Activated T-helper 2 cell treated with anti-CD3 and anti-CD28 coated beads, Interferon-gamma antibody, Interleukin-2, Interleukin-4, amounts not matched to agents 10 μg/mL and 5 μg/mL and 100 μg/mL, durations not matched to agents 14 hours and 24 hours and 36 hours (primary cell): ENCODE measurements at regions of chr18 and their contacts with region 1.

Region 1: DNA sequence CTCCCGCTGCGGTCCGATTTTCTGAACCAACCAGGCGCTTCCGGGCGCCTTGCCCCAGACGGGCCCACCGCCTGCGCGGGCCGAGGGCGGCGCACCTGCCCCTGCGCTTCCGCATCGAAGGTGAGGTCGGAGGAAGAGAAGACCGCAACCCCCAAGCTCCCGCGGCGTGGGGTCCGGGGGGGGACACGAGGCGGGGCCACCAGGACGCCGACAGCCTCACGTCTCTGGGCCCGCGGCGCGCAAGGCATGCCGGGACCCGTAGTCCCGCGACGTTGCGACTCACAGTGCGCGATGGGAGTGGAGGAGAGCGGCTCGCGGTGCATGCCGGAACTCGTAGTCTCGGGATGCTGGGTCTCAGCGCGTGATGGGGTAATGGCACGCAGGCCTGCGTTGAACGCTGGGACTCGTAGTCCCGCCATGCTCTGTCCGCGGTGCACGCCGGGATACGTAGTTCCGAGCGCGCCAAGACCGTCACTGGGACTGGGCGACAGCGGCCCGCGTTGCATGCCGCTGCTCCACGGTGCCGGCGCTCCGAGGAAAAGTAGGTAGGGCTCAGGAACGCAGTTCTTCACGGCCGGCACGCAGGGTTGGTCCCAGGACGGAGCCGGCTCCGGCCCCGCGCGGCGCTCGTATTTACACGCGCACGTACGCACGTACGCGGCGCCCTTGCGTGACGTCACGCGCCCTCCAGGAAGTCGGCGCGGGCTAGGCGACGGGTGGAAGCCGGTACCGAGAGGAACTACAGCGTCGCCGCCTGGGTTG is at the start of gene CTDP1:
- DNase-seq: peak; percentile 98
- H3K4me3 Mint-ChIP-seq: peak within 1 kb of the TSS; percentile 92
- H3K27ac Mint-ChIP-seq: peak within 1 kb of the TSS; percentile 98
- H3K4me1 Mint-ChIP-seq: peaks cover 57% of the 10 kb centered on the region
- H3K27me3 Mint-ChIP-seq: no peaks in the 10 kb centered on the region
- total RNA-seq, gene CTDP1: 42.0 and 43.3 TPM in 2 replicates

Region 2: GRCh38 chr18:79393635-79394533 is 285.4 kb before region 1 on chr18:
- intact Hi-C with region 1: loop called (anchors 1 kb)
- DNase-seq: no peak
- H3K4me3 Mint-ChIP-seq: peak overlapping the region; percentile 85
- H3K27ac Mint-ChIP-seq: peak overlapping the region; percentile 89
- H3K4me1 Mint-ChIP-seq: peaks cover 11% of the 10 kb centered on the region
- H3K27me3 Mint-ChIP-seq: peaks cover 33% of the 10 kb centered on the region

Region 3: DNA sequence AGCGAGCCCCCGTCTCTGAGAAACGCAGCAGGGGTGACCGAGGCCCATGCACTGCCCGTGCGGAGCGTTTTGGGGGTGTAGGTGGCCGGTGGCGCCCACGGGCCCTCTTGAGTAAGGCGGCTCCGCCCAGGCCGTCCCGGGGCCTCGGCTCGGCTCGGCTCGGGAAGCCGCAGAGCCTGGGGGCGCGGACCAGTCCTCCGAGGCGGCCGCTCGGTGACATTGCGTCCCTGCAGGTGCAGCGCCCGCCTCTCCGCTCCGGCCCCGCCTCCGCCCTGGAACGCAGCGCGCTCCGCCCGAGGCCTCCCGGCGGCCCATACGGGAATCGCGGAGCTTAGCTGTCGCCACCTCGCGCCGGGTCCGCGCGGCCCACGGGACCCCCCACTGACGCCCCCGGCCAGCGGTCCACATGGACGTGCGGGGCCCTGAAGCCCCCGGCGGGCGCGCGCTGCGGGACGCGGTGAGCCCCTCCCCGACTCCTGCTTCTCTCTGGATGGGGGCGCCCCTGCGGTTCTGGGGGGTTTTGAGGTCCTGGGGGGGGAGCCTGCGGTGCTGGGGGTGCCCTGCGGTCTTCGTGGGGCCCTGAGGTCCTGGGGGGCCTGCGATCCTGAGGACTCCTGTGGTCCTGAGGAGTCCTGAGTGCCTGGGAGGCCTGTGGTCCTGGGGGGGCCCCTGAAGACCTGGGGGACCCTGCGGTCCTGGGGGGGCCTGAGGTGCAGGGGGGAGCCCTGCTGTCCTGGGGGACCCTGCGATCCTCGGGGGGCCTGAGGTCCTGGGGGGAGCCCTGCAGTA is 285.2 kb after region 1 on chr18 and contains the start of gene HSBP1L1:
- intact Hi-C with region 1: loop called (anchors 5 kb)
- DNase-seq: peak; percentile 65
- H3K4me3 Mint-ChIP-seq: peak within 1 kb of the TSS; percentile 76
- H3K27ac Mint-ChIP-seq: peak within 1 kb of the TSS; percentile 75
- H3K4me1 Mint-ChIP-seq: peaks cover 40% of the 10 kb centered on the region
- H3K27me3 Mint-ChIP-seq: no peaks in the 10 kb centered on the region
- total RNA-seq, gene HSBP1L1: 12.0 and 15.5 TPM in 2 replicates

Region 4: DNA sequence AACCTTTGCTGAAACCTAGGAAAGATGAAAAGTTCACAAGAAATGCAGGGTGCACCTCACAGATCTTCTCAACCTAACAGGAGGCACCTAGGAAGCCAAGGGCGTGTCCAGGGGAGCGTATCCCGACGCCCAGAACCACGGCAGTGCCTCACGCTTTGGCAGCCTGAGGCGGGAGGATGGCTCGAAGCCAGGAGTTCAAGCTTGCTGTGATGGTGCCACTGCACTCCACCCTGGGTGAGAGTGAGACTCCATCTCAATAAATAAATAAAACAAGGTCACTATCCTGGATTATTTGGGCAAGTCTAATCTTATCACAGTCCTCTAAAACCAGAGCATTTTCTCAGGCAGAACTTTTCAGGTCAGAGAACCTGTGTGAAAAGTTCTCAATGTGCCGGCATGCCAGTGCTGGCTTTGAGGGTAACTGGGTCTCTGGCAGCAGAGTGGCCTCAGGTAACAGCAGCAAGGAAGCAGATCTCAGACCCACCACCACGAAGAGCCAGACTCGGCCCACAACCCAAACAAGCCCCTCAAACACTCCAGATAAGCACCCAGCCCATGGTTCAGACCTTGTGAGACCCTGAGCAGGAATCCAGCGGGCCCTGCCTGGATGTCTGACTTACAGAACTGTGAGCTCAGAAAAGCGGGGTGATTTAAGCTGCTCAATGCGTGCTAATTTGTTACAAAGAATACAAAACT is 296.8 kb after region 1 on chr18:
- intact Hi-C with region 1: no loop called
- DNase-seq: no peak
- H3K4me3 Mint-ChIP-seq: no peak overlapping the region
- H3K27ac Mint-ChIP-seq: no peak overlapping the region
- H3K4me1 Mint-ChIP-seq: peaks cover 4% of the 10 kb centered on the region
- H3K27me3 Mint-ChIP-seq: no peaks in the 10 kb centered on the region

Region 5: GRCh38 chr18:80034068-80034851 is 355.0 kb after region 1 on chr18 and contains the start of gene RBFA:
- intact Hi-C with region 1: loop called (anchors 1 kb)
- DNase-seq: peak; percentile 98
- H3K4me3 Mint-ChIP-seq: peak within 1 kb of the TSS; percentile 78
- H3K27ac Mint-ChIP-seq: peak within 1 kb of the TSS; percentile 91
- H3K4me1 Mint-ChIP-seq: peaks cover 28% of the 10 kb centered on the region
- H3K27me3 Mint-ChIP-seq: no peaks in the 10 kb centered on the region
- total RNA-seq, gene RBFA: 48.4 and 49.4 TPM in 2 replicates